HepG2 (cell line): ENCODE measurements at regions of chr1 and their contacts with region 1.

Region 1: DNA sequence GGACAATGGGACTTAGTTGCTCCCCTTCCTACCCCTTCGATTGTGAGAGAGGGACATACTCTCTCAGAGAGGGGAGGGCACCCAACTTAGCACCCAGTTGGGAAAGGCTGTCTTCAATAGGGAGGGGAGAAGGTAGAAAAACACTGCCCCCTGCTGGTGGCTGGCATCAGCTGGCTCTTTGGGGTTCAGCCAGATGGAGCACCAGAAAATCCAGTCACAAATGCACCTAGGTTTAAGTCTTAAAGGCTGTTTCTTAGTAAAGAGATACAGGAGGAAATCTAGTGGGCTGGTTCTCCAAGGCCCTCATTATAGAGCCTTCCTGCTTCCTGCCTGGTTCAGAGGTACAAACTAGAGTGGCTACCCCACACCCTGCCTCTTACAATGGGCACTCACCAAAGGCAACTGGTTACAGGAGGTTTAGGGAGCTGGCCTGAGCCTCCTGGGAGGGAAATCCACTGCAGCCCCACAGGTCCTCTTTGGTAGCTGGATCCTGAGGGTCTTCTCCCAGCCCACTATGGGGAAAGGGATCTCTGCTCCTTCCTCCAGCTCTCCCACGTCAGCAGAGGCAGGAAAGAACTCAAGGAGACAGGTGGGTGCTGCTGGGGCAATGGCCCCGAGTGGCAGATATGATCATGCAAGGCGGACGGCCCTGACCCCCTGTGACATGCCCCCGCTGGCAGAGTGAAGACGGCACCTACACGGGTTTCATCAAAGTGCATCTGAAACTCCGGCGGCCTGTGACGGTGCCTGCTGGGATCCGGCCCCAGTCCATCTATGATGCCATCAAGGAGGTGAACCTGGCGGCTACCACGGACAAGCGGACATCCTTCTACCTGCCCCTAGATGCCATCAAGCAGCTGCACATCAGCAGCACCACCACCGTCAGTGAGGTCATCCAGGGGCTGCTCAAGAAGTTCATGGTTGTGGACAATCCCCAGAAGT is 28.3 kb downstream of the EIF2D start:
- DNase-seq: peak; percentile 55
- ATAC-seq: peak; percentile 87
- H3K4me3 ChIP-seq: no peak overlapping the region
- H3K27ac ChIP-seq: no peak overlapping the region
- H3K4me1 ChIP-seq: no peaks in the 10 kb centered on the region
- H3K27me3 ChIP-seq: no peaks in the 10 kb centered on the region
- CTCF ChIP-seq: peak; percentile 87
- EP300 ChIP-seq: no peak
- POLR2A ChIP-seq: no peak
- RAD21 ChIP-seq: peak; percentile 71

Region 2: DNA sequence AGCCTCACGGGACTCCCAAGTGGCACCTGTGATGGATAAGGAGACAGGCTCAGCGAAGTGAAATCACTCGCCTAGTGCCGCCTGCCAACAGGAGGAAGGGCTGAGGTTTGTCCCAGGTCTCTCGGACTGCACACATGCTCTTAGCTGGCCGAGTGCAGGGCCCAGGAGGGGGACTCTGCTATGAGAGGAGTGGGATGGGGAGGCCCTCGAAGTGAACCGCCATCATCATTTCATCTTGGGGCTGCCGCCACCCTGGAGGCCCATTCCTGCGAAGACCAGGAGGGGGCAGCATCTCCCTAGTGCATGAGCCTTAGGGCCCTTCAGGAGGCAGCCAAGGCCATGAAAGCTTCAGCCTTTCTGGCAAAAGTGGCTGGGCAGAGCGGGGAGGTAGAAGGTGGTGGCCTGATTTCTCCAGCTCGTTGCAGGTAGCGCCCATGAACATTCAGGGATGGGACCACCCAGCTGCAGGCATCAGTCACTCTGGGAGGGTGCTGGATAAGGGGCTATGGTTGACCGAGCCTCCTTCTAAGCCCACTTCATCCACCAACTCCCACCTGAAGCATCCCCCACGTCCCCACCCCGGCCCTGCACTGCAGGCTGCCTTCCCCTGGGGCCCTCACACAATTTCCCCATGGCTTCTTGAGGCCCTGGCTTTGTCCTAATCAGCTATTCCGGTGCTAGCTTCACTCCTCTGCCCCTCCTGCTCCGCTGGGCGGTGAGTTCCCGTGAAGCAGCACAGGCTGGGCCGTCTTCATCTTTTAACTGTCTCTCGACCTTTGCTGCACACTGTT is 93.8 kb before region 1 on chr1:
- CTCF ChIA-PET with region 1: interaction called, 34 read pairs
- POLR2A ChIA-PET with region 1: no interaction called
- in situ Hi-C with region 1: loop called (anchors 5 kb)
- intact Hi-C with region 1: loop called (anchors 1 kb)
- DNase-seq: peak; percentile 35
- ATAC-seq: peak; percentile 95
- H3K4me3 ChIP-seq: no peak overlapping the region
- H3K27ac ChIP-seq: no peak overlapping the region
- H3K4me1 ChIP-seq: no peaks in the 10 kb centered on the region
- H3K27me3 ChIP-seq: no peaks in the 10 kb centered on the region
- CTCF ChIP-seq: peak; percentile 97
- EP300 ChIP-seq: no peak
- POLR2A ChIP-seq: no peak
- RAD21 ChIP-seq: peak; percentile 80

Region 3: GRCh38 chr1:206507284-206508129 is 76.5 kb before region 1 on chr1 and contains the start of gene RASSF5:
- CTCF ChIA-PET with region 1: no interaction called
- POLR2A ChIA-PET with region 1: no interaction called
- in situ Hi-C with region 1: no loop called
- intact Hi-C with region 1: loop called (anchors 2 kb)
- DNase-seq: no peak
- ATAC-seq: peak; percentile 59
- H3K4me3 ChIP-seq: peak within 1 kb of the TSS; percentile 46 to 68 (median 55); a peak in 5 of 6 replicates
- H3K27ac ChIP-seq: no peak within 1 kb of the TSS
- H3K4me1 ChIP-seq: peaks cover 59% of the 10 kb centered on the region
- H3K27me3 ChIP-seq: peaks cover 0 to 13% of the 10 kb centered on the region in 2 experiments; a peak in 2 of 5 replicates
- CTCF ChIP-seq: no peak
- EP300 ChIP-seq: no peak
- POLR2A ChIP-seq: no peak; a peak in 1 of 4 replicates
- RAD21 ChIP-seq: no peak
- total RNA-seq, gene RASSF5: 0.18 and 0.49 TPM in 2 replicates

Region 4: DNA sequence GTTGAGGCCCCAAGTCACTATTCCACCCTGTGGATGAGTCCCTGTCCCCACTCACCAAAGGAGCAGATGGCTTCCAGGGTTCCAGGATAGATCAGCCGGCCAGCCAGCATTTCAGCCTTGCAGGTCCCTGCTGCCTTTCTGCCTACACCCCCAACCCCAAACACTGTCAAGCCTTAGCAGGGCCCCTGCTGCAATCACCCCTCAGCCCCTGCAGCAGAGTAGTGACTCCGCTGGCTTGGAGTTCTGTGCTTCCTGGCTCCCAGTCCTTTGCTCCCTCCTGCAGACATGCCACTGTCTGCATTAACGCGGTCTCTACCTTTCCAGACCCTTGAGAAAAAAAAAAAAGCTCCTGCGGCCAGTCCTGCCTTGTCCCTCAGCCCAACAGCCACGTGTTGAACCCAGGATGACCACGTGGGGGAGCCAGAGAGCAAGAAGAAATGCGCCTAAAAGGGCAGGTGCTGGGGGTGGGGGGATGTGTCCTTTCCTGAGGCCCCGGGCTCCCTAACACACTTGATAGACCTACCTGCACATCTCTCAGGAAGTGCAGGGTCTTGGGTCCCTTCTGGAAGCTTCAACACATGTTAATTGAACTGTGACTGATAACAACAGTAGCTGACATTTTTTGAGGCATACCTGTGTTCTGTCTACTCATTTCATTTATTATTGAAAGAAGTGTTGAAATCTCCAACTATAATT is 39.3 kb before region 1 on chr1:
- CTCF ChIA-PET with region 1: interaction called, 33 read pairs
- POLR2A ChIA-PET with region 1: no interaction called
- in situ Hi-C with region 1: loop called (anchors 5 kb)
- intact Hi-C with region 1: loop called (anchors 1 kb)
- DNase-seq: peak; percentile 48
- ATAC-seq: peak; percentile 96
- H3K4me3 ChIP-seq: no peak overlapping the region
- H3K27ac ChIP-seq: no peak overlapping the region
- H3K4me1 ChIP-seq: no peaks in the 10 kb centered on the region
- H3K27me3 ChIP-seq: no peaks in the 10 kb centered on the region; a peak in 1 of 5 replicates
- CTCF ChIP-seq: peak; percentile 86
- EP300 ChIP-seq: no peak
- POLR2A ChIP-seq: no peak
- RAD21 ChIP-seq: peak; percentile 38; the same call in 1 of the 2 replicates